Activated CD4-positive, alpha-beta T cell treated with anti-CD3 and anti-CD28 coated beads, Interleukin-2, amount 10 ng/mL, durations not matched to agents 7 days and 5 days (primary cell): ENCODE measurements at regions of chr3 and their contacts with region 1.

Region 1: DNA sequence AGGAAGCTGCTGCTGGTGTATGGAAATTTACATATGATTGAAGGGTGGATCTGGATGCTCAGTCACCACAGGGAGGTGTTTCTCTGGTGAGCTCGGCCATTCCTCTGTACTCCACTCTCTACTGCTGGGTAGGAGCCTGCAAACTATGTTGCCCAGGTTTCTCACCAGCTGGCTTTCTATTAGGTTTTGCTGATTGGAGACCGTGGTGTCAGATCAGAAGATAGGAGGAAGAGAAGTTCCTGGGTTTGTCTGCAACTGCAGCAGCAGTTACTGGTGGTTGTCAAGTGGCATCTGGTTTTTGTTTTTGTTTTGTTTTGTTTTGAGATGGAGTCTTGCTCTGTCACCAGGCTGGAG is 61.7 kb downstream of the TAMM41 start:
- DNase-seq: peak; percentile 58
- H3K4me3 Mint-ChIP-seq: peak overlapping the region; percentile 59
- H3K27ac Mint-ChIP-seq: peak overlapping the region; percentile 98
- H3K4me1 Mint-ChIP-seq: peaks cover 32% of the 10 kb centered on the region
- H3K27me3 Mint-ChIP-seq: no peaks in the 10 kb centered on the region

Region 2: GRCh38 chr3:10835406-10835805 is 949.6 kb before region 1 on chr3:
- CTCF ChIA-PET with region 1: no interaction called
- POLR2A ChIA-PET with region 1: no interaction called
- DNase-seq: no peak
- H3K4me3 Mint-ChIP-seq: no peak overlapping the region
- H3K27ac Mint-ChIP-seq: no peak overlapping the region
- H3K4me1 Mint-ChIP-seq: peaks cover 6% of the 10 kb centered on the region
- H3K27me3 Mint-ChIP-seq: peaks cover 7% of the 10 kb centered on the region

Region 3: GRCh38 chr3:11680509-11680908 is 104.5 kb before region 1 on chr3:
- CTCF ChIA-PET with region 1: no interaction called
- POLR2A ChIA-PET with region 1: no interaction called
- DNase-seq: no peak
- H3K4me3 Mint-ChIP-seq: no peak overlapping the region
- H3K27ac Mint-ChIP-seq: no peak overlapping the region
- H3K4me1 Mint-ChIP-seq: no peaks in the 10 kb centered on the region
- H3K27me3 Mint-ChIP-seq: no peaks in the 10 kb centered on the region

Region 4: DNA sequence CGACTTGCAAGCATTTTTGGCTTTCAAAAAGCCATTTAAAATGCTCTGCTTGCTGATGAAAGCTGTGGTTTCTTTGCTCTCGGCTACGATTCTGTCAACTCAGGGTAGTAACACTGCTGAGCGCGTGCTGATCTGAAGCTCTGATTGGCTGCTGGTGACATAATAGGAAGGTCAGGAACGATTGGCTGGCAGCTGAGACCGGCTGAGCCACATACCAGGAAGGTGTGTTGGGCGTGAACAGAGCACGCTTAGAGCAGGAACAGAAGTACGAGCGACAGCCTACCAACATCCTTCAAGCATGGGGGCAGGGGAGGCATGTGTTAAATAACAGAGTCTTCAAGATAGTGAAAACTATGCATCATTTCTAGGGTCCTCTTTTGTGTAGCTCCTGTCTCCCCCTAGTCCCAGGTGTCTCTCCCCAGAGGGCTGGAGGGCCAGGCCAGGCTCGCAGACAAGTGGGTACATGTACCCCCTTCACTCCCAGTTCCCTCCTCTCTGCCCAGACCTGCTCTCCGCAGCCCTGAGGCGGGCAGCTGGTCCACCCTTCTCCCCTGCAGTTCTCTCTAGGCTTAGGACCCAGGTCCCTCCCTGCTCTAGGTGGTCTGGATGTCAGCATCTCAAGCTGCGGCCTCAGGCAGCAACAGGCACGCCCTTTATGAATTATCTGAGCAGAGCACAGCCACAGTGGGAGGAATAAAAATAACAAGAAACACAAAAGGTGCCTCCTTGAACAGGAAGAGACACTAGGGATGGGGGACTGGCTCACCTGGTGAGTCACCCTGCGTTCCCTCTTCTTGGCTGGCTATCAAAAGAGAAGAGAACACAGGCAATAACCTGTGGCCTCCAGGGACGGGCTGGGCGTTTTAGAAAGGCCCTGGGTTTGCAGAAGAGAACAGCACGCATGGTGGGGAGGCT is 14.3 kb before region 1 on chr3:
- CTCF ChIA-PET with region 1: interaction called, 11 read pairs
- POLR2A ChIA-PET with region 1: no interaction called
- DNase-seq: peak; percentile 93
- H3K4me3 Mint-ChIP-seq: peak overlapping the region; percentile 0
- H3K27ac Mint-ChIP-seq: peak overlapping the region; percentile 91
- H3K4me1 Mint-ChIP-seq: peaks cover 26% of the 10 kb centered on the region
- H3K27me3 Mint-ChIP-seq: no peaks in the 10 kb centered on the region